Calu3 (cell line): ENCODE measurements at regions of chr9 and their contacts with region 1.

Region 1: GRCh38 chr9:89000973-89001916 is 10.0 kb downstream of the S1PR3 start:
- DNase-seq: peak; percentile 81
- H3K4me3 Mint-ChIP-seq: peak overlapping the region; percentile 46
- H3K27ac Mint-ChIP-seq: no peak overlapping the region
- H3K4me1 Mint-ChIP-seq: no peaks in the 10 kb centered on the region
- H3K27me3 Mint-ChIP-seq: no peaks in the 10 kb centered on the region
- CTCF ChIP-seq: peak; percentile 57

Region 2: DNA sequence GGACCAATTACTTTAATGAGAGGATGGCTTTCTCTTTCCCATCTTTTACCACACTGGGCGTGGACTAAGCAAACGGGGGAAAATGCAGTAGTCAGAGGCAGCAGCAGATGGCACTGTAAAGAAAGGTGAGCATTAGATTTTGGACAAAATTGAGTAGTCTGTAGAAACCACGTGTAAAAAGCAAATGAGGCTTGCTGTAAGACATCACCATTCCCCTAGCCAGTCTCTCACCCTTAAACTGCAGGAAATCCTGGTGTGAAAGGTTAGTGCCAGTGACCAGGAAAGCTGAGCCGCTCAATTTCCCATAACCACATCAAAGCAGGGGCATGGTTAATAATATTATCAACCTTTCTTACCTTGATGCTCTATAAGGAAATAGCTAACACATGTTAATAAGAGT is 894.8 kb before region 1 on chr9:
- CTCF ChIA-PET with region 1: no interaction called
- intact Hi-C with region 1: loop called (anchors 5 kb)
- DNase-seq: peak; percentile 31
- H3K4me3 Mint-ChIP-seq: no peak overlapping the region
- H3K27ac Mint-ChIP-seq: peak overlapping the region; percentile 36
- H3K4me1 Mint-ChIP-seq: no peaks in the 10 kb centered on the region
- H3K27me3 Mint-ChIP-seq: peaks cover 27% of the 10 kb centered on the region
- CTCF ChIP-seq: no peak

Region 3: DNA sequence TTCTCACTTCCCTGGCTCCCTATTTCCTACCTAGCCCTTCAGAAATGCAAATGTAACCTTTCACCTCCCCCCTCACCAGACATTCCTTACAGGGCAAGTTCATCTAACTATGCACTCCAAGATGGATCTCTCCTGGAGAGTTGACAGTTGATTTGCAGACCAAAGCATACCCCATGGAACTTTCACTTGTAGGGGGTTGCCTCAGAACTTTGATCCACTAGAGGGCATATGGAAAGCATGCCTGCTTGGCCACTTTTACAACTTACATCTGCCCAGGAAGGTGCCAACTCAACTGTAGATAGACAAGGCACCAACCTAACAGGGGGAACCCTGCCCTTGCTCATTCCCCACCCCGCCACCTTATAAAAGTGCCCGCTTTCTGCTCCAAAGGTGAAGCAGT is 278.5 kb before region 1 on chr9:
- CTCF ChIA-PET with region 1: no interaction called
- intact Hi-C with region 1: loop called (anchors 2 kb)
- DNase-seq: no peak
- H3K4me3 Mint-ChIP-seq: no peak overlapping the region
- H3K27ac Mint-ChIP-seq: no peak overlapping the region
- H3K4me1 Mint-ChIP-seq: no peaks in the 10 kb centered on the region
- H3K27me3 Mint-ChIP-seq: peaks cover 27% of the 10 kb centered on the region
- CTCF ChIP-seq: no peak

Region 4: DNA sequence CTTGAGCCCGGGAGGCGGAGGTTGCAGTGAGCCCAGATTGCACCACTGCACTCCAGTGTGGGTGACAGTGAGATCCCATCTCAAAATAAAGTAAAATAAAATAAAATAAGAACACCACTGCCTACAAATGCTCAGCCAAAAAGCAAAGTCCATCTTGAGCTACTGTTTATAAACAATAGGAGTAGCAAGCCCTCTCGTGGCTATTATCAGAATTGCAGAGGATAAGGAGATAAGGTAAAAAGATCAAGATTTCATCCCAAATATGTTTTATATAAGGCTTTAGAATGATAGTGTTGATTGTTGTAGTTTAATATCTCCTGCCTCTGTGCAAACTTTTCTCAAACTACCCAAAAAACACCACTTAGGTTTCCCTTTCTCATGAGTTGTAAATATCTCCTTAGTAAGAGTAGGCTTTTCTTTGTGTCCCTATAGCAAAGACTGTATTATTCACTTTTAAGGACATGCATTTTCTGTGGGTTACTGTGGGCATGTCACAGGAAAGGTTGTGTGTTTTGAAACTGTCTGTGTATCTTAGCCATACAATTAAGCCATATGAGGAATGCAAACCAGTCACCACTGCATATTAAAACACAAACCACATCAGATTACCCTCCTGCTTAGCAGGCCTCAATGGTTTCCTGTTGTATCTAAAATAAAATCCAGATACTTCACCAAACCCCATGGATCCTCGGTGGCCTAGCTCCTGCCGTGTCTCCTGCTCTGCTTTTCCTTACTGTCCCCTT is 277.9 kb after region 1 on chr9:
- CTCF ChIA-PET with region 1: interaction called, 11 read pairs
- intact Hi-C with region 1: loop called (anchors 5 kb)
- DNase-seq: peak; percentile 12
- H3K4me3 Mint-ChIP-seq: no peak overlapping the region
- H3K27ac Mint-ChIP-seq: no peak overlapping the region
- H3K4me1 Mint-ChIP-seq: no peaks in the 10 kb centered on the region
- H3K27me3 Mint-ChIP-seq: no peaks in the 10 kb centered on the region
- CTCF ChIP-seq: peak; percentile 20